Lower lobe of right lung (tissue), 2 donors: ENCODE measurements at regions of chr11 and their contacts with region 1.

Region 1: DNA sequence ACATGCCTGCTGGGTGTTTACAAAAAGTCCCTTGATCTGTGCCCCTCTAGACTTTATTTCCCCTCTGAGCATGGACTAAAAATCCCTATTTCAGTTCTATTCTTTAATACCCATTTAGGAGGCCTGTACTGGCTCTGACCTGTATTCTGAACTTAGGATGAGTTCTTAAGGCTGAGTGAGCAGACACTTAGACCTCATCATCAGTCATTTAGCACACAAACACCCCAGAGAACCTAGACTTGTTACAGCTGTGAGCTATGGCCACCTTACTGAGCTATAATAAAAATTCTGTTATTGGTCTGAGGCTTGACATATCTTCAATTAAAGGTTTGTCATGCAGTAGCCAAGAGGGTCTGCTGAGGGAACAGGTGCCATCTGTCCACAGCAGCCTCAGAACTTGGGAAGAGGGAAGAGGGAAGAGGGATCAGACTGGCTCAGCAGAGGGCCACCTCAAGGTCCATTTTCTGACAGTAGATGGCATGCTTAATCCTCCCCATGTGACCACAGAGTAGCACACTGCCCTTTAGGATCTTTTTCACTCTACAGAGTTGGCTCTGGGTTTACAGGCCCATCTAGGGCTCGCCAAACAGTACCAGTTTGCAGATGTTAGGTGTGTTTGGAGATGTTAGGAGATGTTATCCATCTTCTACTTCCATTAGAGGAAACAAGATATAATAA is 30.2 kb upstream of the RRM1 start:
- DNase-seq: no peak
- ATAC-seq: no peak
- H3K4me3 ChIP-seq: no peak overlapping the region
- H3K27ac ChIP-seq: no peak overlapping the region
- H3K4me1 ChIP-seq: peaks cover 46% of the 10 kb centered on the region
- H3K27me3 ChIP-seq: no peaks in the 10 kb centered on the region
- CTCF ChIP-seq: no peak

Region 2: DNA sequence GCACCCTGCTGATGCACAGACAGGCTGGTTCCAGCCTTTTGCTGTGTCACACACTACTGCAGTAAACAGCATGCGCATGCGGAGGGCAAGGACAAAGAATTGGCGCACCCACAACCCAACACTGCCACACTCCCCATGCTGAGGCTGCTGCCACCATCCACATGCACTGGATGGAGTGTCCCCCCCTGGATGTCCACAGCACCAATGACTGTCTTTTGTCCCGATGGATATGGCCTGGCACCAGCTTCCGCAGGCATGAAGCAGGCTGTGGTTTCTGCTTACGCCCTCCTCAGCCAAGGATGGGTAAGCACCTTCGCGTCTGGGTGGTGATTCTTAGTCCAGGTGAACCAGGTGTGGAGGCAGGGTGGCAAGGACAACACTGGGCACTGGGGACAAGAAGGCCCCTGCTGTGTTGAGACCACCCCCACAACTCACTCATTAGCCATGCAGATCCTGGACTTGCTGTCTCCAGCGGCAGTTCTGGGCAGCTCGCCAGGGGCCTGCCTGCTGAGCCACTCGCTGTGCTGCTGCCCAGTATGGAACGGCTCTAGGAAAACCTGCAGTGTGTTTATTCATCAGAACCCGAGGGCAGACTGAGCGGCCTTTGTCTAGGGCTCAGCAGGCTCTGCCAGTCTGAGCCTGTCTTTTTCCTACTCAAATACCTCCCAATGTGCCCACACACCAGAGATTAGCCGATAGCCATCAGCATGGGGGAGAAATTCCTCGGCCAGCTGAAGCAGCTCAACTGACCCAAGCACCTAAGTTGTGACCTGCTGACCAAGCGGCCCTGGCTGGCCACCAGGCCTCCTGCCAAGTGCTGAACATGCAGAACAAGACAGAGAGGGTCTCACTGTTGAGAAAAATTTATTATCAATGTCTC is 1064.1 kb before region 1 on chr11:
- intact Hi-C with region 1: no loop called
- DNase-seq: peak; percentile 70
- ATAC-seq: peak; percentile 6 to 21
- H3K4me3 ChIP-seq: no peak overlapping the region
- H3K27ac ChIP-seq: no peak overlapping the region
- H3K4me1 ChIP-seq: no peaks in the 10 kb centered on the region
- H3K27me3 ChIP-seq: no peaks in the 10 kb centered on the region
- CTCF ChIP-seq: no peak

Region 3: GRCh38 chr11:3775736-3776406 is 288.5 kb before region 1 on chr11:
- intact Hi-C with region 1: no loop called
- DNase-seq: no peak
- ATAC-seq: no peak
- H3K4me3 ChIP-seq: no peak overlapping the region
- H3K27ac ChIP-seq: no peak overlapping the region
- H3K4me1 ChIP-seq: peaks cover 2% of the 10 kb centered on the region
- H3K27me3 ChIP-seq: no peaks in the 10 kb centered on the region
- CTCF ChIP-seq: no peak

Region 4: DNA sequence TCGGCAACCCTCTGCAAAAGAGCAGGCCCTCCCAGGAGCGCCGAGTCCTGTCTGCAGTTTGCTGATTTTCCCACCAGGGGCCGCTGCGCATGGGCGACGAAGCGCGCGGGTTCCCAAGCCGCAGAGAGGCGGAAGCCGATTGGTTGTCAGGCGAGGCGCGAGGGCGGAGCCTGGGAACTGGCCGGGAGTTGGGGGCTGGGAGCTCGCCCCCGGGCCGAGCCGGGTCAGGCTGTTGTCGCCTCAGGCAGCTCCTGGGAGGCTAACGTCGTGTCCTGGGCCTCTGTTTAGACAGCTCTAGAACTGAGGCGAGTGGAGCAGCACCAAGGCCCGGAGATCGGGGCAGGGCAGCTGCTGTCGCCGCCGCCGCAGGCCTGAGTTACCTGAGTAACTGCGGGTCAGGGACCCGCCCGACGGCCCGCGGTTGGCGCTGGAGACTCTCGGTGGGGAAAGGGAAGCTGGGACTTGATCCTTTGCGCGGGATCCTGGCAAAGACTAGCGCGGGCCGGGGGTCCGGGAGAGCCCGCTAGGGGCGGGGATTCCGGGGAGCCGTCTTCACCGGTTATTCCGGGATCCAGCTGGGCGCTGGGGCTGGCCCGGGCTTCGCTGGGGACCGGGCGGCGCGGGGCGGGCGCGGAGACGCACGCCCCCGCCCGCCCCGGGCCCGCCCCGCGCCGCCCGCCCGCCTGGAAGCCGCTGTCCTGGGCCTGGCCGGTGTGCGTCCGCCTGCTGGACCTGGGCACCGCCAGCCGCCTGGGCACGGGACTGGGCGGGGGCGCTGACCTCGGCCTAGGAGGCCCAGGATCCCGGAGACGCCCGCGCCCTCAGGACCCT is 209.2 kb before region 1 on chr11 and contains the start of gene STIM1:
- intact Hi-C with region 1: loop called (anchors 5 kb)
- DNase-seq: peak; percentile 96
- ATAC-seq: peak; percentile 96
- H3K4me3 ChIP-seq: peak within 1 kb of the TSS; percentile 92
- H3K27ac ChIP-seq: peak within 1 kb of the TSS; percentile 96
- H3K4me1 ChIP-seq: peaks cover 54% of the 10 kb centered on the region
- H3K27me3 ChIP-seq: no peaks in the 10 kb centered on the region
- CTCF ChIP-seq: peak; percentile 98
- total RNA-seq, gene STIM1: 59.5 TPM